OCI-LY7 (cell line): ENCODE measurements at regions of chr13 and their contacts with region 1.

Region 1: GRCh38 chr13:46382224-46382623 is 4.8 kb downstream of the RUBCNL start:
- DNase-seq: peak; percentile 81
- H3K4me3 ChIP-seq: peak overlapping the region; percentile 89
- H3K27ac ChIP-seq: peak overlapping the region; percentile 96
- H3K4me1 ChIP-seq: peaks cover 67% of the 10 kb centered on the region
- CTCF ChIP-seq: no peak

Region 2: GRCh38 chr13:46321494-46322225 is 60.6 kb before region 1 on chr13:
- CTCF ChIA-PET with region 1: no interaction called
- POLR2A ChIA-PET with region 1: no interaction called
- intact Hi-C with region 1: no loop called
- DNase-seq: peak; percentile 84
- H3K4me3 ChIP-seq: no peak overlapping the region
- H3K27ac ChIP-seq: no peak overlapping the region
- H3K4me1 ChIP-seq: peaks cover 7% of the 10 kb centered on the region
- CTCF ChIP-seq: peak; percentile 97

Region 3: DNA sequence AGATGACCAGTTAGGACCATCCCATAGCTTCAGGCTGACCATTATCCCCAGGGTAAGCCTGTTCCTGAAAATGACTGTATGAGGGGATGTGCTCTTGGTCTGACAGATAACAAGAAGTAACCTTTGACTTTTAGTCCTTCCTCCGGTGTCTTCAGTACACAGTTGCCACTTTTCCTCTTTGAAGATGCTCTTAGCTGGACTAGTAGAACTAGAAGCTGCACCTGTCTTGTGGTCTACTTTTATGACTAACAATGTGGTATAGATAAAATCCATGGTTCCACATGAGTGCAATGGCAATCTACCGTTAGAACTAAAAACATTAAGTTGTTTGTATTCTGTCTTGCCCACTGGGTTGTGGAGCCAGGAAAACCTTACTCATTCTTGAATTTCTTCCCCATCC is 10.7 kb after region 1 on chr13:
- CTCF ChIA-PET with region 1: no interaction called
- POLR2A ChIA-PET with region 1: interaction called, 44 read pairs
- intact Hi-C with region 1: no loop called
- DNase-seq: peak; percentile 93
- H3K4me3 ChIP-seq: peak overlapping the region; percentile 33
- H3K27ac ChIP-seq: peak overlapping the region; percentile 96
- H3K4me1 ChIP-seq: peaks cover 74% of the 10 kb centered on the region
- CTCF ChIP-seq: no peak; the same call in 1 of the 2 replicates